PC-9 (cell line): ENCODE measurements at regions of chr3 and their contacts with region 1.

Region 1: DNA sequence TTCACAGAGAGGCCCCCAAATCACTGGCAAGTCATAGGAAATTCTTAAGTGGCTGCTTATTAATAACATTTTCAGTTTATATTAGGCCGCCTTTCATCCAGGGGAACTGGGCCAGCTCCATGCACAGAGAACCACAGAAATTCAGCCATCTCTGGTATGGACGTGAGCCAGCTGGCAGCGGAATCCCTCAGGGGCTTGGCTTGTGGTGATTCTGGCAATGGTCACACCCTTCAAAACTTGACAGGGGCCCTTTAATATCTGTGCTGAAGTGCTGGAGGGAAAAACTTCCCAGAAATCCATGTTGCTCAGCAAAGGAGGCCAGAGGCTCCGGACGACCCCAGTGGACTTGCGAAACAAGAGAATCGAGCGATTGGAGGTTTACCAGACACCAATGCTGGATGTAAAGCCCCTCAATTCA is 11.3 kb downstream of the PRICKLE2 start:
- DNase-seq: peak in 1 of 2 experiments; percentile 67
- H3K4me3 ChIP-seq: no peak overlapping the region
- H3K27ac ChIP-seq: no peak overlapping the region
- H3K4me1 ChIP-seq: peaks cover 11% of the 10 kb centered on the region
- H3K27me3 ChIP-seq: no peaks in the 10 kb centered on the region
- CTCF ChIP-seq: no peak

Region 2: GRCh38 chr3:63731866-63732265 is 482.1 kb before region 1 on chr3:
- CTCF ChIA-PET with region 1: no interaction called
- POLR2A ChIA-PET with region 1: no interaction called
- intact Hi-C with region 1: no loop called
- DNase-seq: no peak
- H3K4me3 ChIP-seq: no peak overlapping the region
- H3K27ac ChIP-seq: no peak overlapping the region
- H3K4me1 ChIP-seq: no peaks in the 10 kb centered on the region
- H3K27me3 ChIP-seq: no peaks in the 10 kb centered on the region
- CTCF ChIP-seq: no peak

Region 3: GRCh38 chr3:64084640-64085039 is 129.3 kb before region 1 on chr3:
- CTCF ChIA-PET with region 1: no interaction called
- POLR2A ChIA-PET with region 1: no interaction called
- intact Hi-C with region 1: loop called (anchors 5 kb)
- DNase-seq: peak; percentile 17 to 84
- H3K4me3 ChIP-seq: no peak overlapping the region
- H3K27ac ChIP-seq: 0 out of 2 replicates have a peak overlapping the region, but pooled peaks have one; percentile 23
- H3K4me1 ChIP-seq: no peaks in the 10 kb centered on the region; the same call in 1 of the 2 replicates
- H3K27me3 ChIP-seq: no peaks in the 10 kb centered on the region
- CTCF ChIP-seq: no peak

Region 4: DNA sequence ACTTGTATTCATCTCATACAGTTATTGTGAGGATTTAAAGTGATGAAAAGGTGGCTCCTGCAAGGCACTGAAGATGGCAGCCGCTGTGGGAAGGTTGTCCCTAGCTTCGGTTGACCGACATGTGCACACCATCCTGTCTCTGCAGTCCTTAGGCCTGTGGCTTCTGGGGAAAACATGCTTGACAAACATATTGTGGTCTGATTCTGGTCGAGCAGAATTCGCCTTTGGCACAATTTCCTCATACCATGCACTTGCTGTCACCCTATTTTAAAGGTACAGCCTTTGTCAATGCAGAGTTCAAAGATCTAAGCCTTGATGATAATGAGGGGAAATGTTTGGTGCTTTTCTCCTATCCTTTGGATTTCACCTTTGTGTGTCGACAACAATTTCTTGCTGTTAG is 39.6 kb before region 1 on chr3:
- CTCF ChIA-PET with region 1: no interaction called
- POLR2A ChIA-PET with region 1: no interaction called
- intact Hi-C with region 1: loop called (anchors 2 kb)
- DNase-seq: peak; percentile 65 to 66
- H3K4me3 ChIP-seq: no peak overlapping the region
- H3K27ac ChIP-seq: 0 out of 2 replicates have a peak overlapping the region, but pooled peaks have one; percentile 17
- H3K4me1 ChIP-seq: peaks cover 24% of the 10 kb centered on the region
- H3K27me3 ChIP-seq: no peaks in the 10 kb centered on the region
- CTCF ChIP-seq: no peak

Region 5: DNA sequence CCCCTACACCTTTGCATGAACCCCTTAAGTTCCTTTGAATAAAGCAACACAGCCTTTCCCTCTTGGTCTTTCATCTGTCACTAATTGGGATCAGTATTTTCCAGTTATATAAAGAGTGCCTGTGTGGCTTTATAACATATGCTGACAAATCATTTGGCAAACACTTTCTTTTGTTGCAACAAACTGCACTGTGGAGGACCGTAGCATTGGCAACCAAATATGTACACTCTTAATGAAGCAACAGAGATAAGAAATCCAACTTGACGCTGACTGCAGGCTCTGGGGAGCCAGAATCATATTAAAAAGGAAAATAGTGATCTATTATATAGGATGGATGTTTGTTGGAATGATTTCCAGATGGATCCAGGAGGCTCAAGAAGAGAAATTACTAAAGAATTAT is 131.4 kb after region 1 on chr3:
- CTCF ChIA-PET with region 1: no interaction called
- POLR2A ChIA-PET with region 1: no interaction called
- intact Hi-C with region 1: no loop called
- DNase-seq: peak in 1 of 2 experiments; percentile 56
- H3K4me3 ChIP-seq: no peak overlapping the region
- H3K27ac ChIP-seq: peak overlapping the region; percentile 60; the same call in 1 of the 2 replicates
- H3K4me1 ChIP-seq: peaks cover 35% of the 10 kb centered on the region
- H3K27me3 ChIP-seq: no peaks in the 10 kb centered on the region
- CTCF ChIP-seq: no peak

Region 6: DNA sequence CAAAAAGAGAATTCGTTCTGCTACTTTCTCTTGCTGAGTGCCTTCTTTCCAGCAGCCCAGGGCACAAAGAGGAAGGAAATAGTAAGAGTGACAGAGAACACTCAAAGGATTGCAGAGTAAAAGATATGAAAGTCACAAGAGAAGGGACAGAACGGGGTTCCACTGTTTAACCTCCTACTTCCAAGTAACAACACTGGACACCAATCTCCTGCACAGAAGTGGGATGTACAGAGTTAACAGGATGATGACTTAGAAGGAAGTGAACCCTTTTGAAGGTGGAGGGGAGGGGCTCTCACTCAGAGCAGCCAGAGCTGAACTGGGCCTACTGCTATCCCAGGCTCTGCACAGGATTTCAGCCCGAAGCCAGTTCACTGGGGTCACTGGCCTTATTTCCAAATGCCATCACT is 141.4 kb after region 1 on chr3:
- CTCF ChIA-PET with region 1: no interaction called
- POLR2A ChIA-PET with region 1: no interaction called
- intact Hi-C with region 1: loop called (anchors 1 kb)
- DNase-seq: peak; percentile 61 to 69
- H3K4me3 ChIP-seq: no peak overlapping the region
- H3K27ac ChIP-seq: peak overlapping the region; percentile 46; the same call in 1 of the 2 replicates
- H3K4me1 ChIP-seq: peaks cover 29% of the 10 kb centered on the region
- H3K27me3 ChIP-seq: no peaks in the 10 kb centered on the region
- CTCF ChIP-seq: no peak

Region 7: GRCh38 chr3:65883613-65884012 is 1669.6 kb after region 1 on chr3:
- CTCF ChIA-PET with region 1: no interaction called
- POLR2A ChIA-PET with region 1: interaction called, 12 read pairs
- intact Hi-C with region 1: no loop called
- DNase-seq: no peak
- H3K4me3 ChIP-seq: no peak overlapping the region
- H3K27ac ChIP-seq: no peak overlapping the region
- H3K4me1 ChIP-seq: peaks cover 11% of the 10 kb centered on the region
- H3K27me3 ChIP-seq: no peaks in the 10 kb centered on the region
- CTCF ChIP-seq: no peak